Astrocyte of the spinal cord (primary cell): ENCODE measurements at regions of chr9 and their contacts with region 1.

Region 1: DNA sequence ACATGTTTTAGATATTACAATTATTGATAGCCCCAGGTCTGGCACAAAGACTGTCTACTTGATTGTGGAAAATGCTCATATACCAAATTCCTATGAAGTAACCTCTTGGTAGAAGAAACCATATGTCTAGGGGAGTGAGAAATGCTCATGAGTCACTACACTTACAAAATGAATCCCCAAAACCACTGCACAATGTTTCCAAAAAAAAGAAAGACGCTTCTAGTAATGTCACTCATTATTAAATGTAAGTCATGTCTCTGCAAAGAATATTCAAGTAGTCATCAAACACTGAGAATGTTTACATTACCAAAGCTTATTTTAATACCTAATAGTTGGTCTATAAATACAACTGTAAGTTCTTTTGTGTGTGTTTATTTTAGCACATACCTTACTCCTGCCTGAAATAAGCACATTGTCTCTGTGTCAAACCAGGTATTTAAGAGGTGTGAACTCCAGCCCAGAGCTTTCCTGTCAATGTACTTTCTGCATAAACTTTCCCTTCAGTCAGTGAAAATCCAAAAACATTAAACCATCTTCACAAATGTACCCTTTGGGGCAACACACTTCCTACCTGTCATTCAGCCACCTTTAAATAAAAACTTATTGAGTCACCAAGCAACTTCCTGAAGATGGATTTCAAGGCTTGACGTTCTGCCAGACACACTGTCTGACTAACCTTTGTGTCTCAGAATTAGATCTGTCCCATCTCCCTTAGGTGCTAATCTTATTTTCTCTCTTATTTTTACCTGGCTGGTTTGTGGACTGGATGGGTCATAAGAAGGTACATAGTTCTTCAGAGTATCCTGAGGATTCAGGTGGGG is 194.0 kb downstream of the NFIB start:
- DNase-seq: peak; percentile 61
- H3K4me3 ChIP-seq: no peak overlapping the region
- CTCF ChIP-seq: no peak

Region 2: GRCh38 chr9:14258660-14259239 is 138.8 kb after region 1 on chr9:
- in situ Hi-C with region 1: no loop called
- DNase-seq: no peak
- H3K4me3 ChIP-seq: no peak overlapping the region
- CTCF ChIP-seq: no peak

Region 3: DNA sequence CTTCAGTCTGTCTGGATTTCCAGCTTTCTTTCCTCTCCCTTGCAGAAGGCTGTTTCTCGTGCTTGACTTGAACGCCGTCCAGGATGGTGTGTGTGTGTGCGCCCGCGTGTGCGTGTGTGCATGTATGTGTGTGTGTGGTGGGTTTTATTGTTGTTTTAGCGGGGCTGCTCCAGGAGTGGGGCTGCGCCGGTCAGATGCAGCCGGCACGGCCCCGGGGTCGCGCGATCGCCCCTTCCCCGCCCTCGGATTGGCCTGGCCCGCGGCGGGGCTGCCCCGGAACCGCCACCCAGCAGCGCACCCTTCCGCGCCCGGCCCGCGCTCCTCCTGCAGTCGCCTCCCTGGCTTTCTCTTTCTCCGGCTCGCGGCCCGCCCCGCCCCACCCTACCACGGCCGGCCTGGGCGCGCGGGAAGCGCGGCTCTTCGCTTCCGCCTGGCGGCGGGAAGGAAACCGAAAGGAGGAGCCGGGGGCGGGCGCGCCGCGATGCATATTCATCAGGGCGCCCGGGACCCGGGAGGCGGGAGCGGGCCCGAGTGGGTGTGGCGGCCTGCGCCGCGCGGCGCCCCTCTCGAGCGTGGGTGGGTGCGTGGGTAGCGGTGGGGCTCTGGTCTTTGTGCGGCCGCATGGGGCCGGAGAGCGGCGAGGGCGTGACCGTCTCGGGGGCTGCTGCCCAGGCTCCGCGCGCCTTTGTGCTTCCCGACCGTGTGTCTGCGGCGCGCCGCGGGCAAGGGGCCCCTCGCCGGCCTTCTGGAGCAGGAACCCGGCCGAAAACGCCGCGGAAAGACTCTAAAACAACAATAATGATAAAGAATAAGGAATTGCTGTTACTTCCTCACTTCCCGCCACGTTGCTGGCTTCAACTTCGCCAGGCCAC is 202.5 kb after region 1 on chr9:
- in situ Hi-C with region 1: loop called (anchors 25 kb)
- DNase-seq: peak; percentile 95
- H3K4me3 ChIP-seq: peak overlapping the region; percentile 59
- CTCF ChIP-seq: peak; percentile 43